ENCODE measurements at regions of chr9 and their contacts with region 1.

Region 1: DNA sequence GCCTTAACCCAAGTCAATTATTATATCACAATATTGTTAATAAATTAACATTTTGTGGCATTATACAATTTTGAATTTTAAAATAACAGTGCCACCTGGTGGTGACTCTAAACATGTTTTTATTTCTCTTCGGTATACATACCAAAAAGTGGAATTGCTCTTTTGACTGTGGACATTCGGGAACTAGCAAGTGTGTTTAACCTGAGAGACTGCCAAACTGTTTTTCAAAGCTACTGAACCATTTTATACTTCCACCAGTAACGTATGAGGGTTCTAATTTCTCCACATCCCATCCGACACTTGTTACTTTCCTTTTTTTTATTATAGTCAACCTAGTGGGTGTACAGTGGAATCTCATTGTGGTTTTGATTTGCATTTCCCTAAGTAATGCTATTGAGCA is 18.3 kb upstream of the HSDL2 start:
- DNase-seq: peak in 2 of 4 donors; percentile 42 to 62
- ATAC-seq: peak; percentile 78
- H3K4me3 ChIP-seq: no peak overlapping the region
- H3K27ac ChIP-seq: no peak overlapping the region
- H3K4me1 ChIP-seq: no peaks in the 10 kb centered on the region
- H3K27me3 ChIP-seq: no peaks in the 10 kb centered on the region
- CTCF ChIP-seq: peak; percentile 47 to 48

Region 2: GRCh38 chr9:112086627-112087026 is 275.0 kb before region 1 on chr9:
- intact Hi-C with region 1: loop called (anchors 5 to 10 kb)
- DNase-seq: peak in 1 of 4 donors; percentile 15
- ATAC-seq: no peak
- H3K4me3 ChIP-seq: no peak overlapping the region
- H3K27ac ChIP-seq: no peak overlapping the region
- H3K4me1 ChIP-seq: no peaks in the 10 kb centered on the region
- H3K27me3 ChIP-seq: no peaks in the 10 kb centered on the region
- CTCF ChIP-seq: peak; percentile 9 to 33

Region 3: DNA sequence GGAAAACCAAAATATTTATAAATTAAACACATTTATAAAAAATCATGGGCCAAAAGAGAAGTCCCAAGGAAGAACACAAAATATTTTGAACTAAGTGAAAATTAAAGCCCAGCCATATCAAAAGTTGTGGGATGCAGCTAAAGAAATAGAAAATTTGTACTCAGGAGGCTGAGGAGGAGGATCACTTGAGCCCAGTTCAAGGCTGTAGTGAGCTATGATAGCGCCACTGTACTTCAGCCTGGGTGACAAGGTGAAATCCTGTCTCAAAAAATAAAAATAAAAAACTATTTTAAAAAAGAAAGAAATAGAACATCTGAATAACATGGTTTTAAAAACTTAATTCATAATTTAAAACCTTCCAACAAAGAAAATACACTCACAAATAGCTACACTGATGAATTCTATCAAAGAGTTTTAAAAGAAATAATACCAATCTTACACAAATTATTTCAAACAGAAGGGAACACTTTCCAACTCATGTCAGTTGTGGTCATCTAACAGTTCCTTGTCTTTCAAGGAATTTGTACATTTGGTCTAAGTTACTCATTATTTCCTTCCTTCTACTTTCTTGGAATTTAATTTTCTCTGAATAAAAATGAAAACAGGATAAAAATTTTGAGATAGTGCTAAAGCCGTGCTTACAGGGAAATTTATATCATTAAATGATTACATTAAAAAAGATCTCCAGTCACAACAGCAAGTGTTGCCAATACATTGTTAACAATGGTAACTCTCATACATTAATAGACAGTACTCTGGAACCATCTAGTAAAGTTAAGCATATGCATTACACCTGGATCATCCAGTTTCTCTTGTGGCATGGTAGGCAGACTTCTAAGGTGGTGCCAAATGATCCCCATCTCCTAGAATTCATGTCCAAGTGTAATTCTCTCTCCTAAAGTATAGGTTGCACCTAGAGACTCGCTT is 46.0 kb before region 1 on chr9:
- intact Hi-C with region 1: no loop called
- DNase-seq: no peak
- ATAC-seq: no peak
- H3K4me3 ChIP-seq: no peak overlapping the region
- H3K27ac ChIP-seq: peak overlapping the region in 1 of 2 donors; percentile 7
- H3K4me1 ChIP-seq: peaks cover 0 to 55% of the 10 kb centered on the region in 2 donors
- H3K27me3 ChIP-seq: no peaks in the 10 kb centered on the region
- CTCF ChIP-seq: no peak

Region 4: GRCh38 chr9:112503170-112503569 is 141.6 kb after region 1 on chr9:
- intact Hi-C with region 1: no loop called
- DNase-seq: peak in 2 of 4 donors; percentile 50 to 59
- ATAC-seq: peak; percentile 79
- H3K4me3 ChIP-seq: no peak overlapping the region
- H3K27ac ChIP-seq: no peak overlapping the region
- H3K4me1 ChIP-seq: peaks cover 0 to 5% of the 10 kb centered on the region in 2 donors
- H3K27me3 ChIP-seq: no peaks in the 10 kb centered on the region
- CTCF ChIP-seq: no peak